SK-N-SH (cell line): ENCODE measurements at regions of chr1 and their contacts with region 1.

Region 1: DNA sequence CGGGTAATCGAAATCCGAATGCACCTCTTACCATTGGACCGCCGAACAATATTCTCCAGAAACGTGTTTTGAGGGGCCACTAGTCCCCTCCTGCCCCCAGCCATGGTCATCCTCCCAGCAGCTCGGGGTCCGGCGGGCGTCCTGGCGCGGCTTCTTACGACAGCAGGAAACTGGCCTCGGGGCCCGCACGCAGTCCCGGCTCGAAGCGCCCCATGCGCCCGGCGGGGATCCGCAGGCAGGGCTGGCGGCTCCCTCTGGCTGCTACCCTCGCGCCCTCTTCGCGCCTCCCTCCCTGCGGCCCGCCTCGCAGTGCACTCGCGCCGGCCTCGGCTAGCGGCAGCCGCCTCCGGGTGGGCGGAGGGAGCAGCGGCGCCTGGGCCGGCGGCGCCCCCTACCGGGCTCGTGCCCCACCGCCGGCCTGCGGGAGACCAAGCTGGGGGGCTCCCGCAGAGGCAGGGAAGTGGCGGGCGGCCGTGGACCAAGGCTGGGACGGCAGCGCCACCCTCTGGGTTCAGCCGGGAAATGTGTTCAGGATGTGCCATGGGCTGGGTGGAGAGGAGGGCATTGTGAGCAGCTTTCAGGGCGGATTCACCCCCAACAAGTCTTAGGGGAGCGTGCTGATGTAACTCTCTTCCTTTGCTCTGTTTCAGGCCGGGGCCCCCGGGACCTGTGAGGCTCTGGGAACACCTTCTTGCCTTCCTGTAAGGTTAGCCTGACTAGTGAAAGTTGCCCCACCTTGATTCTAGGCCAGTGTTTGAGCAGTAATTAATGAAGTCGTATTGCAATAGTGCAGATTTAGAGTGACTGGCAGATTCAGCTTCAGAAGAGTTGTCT is at the start of gene KCNH1:
- DNase-seq: peak; percentile 96
- H3K4me3 ChIP-seq: peak within 1 kb of the TSS; percentile 61 to 72
- H3K27ac ChIP-seq: peak within 1 kb of the TSS in 1 of 2 experiments; percentile 68; a peak in 2 of 4 replicates
- H3K4me1 ChIP-seq: peaks cover 0 to 13% of the 10 kb centered on the region in 2 experiments; a peak in 2 of 4 replicates
- H3K27me3 ChIP-seq: peaks cover 27% of the 10 kb centered on the region
- CTCF ChIP-seq: peak; percentile 95
- EP300 ChIP-seq: no peak; a peak in 2 of 4 replicates
- RAD21 ChIP-seq: peak; percentile 95
- polyA plus RNA-seq, gene KCNH1: 0.08 and 0.26 TPM in 2 replicates

Region 2: GRCh38 chr1:210400043-210400840 is 733.8 kb before region 1 on chr1:
- CTCF ChIA-PET with region 1: interaction called, 323 read pairs
- POLR2A ChIA-PET with region 1: no interaction called
- DNase-seq: peak; percentile 73
- H3K4me3 ChIP-seq: no peak overlapping the region; a peak in 1 of 4 replicates
- H3K27ac ChIP-seq: no peak overlapping the region
- H3K4me1 ChIP-seq: peaks cover 0 to 1% of the 10 kb centered on the region in 2 experiments; a peak in 2 of 4 replicates
- H3K27me3 ChIP-seq: no peaks in the 10 kb centered on the region
- CTCF ChIP-seq: peak; percentile 93
- EP300 ChIP-seq: no peak
- RAD21 ChIP-seq: peak; percentile 88

Region 3: GRCh38 chr1:210455840-210456603 is 678.0 kb before region 1 on chr1:
- CTCF ChIA-PET with region 1: interaction called, 264 read pairs
- POLR2A ChIA-PET with region 1: no interaction called
- DNase-seq: no peak
- H3K4me3 ChIP-seq: no peak overlapping the region
- H3K27ac ChIP-seq: no peak overlapping the region
- H3K4me1 ChIP-seq: no peaks in the 10 kb centered on the region
- H3K27me3 ChIP-seq: no peaks in the 10 kb centered on the region
- CTCF ChIP-seq: no peak
- EP300 ChIP-seq: no peak
- RAD21 ChIP-seq: no peak

Region 4: DNA sequence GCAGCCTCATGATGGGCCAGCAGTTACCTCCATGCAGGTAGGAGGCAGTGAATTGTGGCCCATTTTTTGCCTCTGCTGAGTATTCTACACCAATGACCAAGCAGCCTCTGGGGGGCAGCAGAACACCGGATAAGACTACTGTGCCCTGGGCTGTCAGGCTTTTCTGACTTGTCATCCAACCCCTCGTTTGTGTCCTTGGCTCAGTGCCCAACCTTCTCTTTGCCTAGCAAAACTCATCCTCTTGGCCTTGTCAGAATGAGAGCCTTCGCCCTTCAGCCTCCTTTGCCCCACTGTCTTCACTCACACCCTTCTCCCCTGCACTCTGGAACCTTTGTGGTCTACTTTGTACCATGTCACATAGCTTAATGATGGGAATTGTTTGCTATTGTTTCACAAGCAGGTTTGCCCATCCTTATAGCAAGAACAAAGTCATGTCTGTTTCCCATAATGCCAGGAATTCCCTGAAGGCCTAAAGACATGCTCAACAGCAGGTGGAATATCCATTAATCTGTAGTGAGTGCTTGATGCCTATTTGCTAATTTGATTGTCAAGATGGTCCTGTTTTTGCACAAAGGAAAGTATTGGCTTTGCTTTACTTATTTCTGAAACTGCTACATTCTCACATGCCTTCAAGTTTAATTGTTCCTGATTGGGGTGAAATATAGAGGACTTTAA is 549.5 kb before region 1 on chr1:
- CTCF ChIA-PET with region 1: interaction called, 227 read pairs
- POLR2A ChIA-PET with region 1: interaction called, 12 read pairs
- DNase-seq: peak; percentile 75
- H3K4me3 ChIP-seq: no peak overlapping the region
- H3K27ac ChIP-seq: peak overlapping the region in 1 of 2 experiments; percentile 95; a peak in 2 of 4 replicates
- H3K4me1 ChIP-seq: peaks cover 0 to 16% of the 10 kb centered on the region in 2 experiments; a peak in 2 of 4 replicates
- H3K27me3 ChIP-seq: no peaks in the 10 kb centered on the region
- CTCF ChIP-seq: peak; percentile 88
- EP300 ChIP-seq: peak in 1 of 2 experiments; percentile 90; a peak in 2 of 4 replicates
- RAD21 ChIP-seq: peak; percentile 98

Region 5: GRCh38 chr1:210684466-210685294 is 449.4 kb before region 1 on chr1:
- CTCF ChIA-PET with region 1: interaction called, 12 read pairs
- POLR2A ChIA-PET with region 1: no interaction called
- DNase-seq: no peak
- H3K4me3 ChIP-seq: no peak overlapping the region
- H3K27ac ChIP-seq: no peak overlapping the region
- H3K4me1 ChIP-seq: peaks cover 0 to 14% of the 10 kb centered on the region in 2 experiments; a peak in 1 of 4 replicates
- H3K27me3 ChIP-seq: no peaks in the 10 kb centered on the region
- CTCF ChIP-seq: no peak
- EP300 ChIP-seq: no peak
- RAD21 ChIP-seq: no peak

Region 6: DNA sequence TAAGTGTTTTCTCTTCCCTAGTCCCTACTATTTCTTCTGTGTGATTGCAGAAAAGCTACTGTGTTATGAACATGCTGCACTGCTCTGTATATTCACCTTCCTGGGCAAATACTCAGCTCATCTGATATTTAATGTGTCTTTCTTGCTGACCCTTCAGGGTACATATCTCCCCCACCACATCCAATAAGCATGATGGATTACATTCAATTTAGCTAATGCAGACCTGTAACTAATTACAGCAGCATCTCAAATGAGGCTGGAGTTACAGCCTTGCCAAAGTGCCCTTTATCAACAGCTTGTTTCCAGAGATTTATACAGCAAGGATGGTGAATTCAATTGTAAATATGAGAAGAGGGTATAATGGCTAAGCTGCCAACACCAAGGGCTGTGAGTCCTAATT is 144.1 kb before region 1 on chr1:
- CTCF ChIA-PET with region 1: interaction called, 14 read pairs
- POLR2A ChIA-PET with region 1: interaction called, 11 read pairs
- DNase-seq: peak; percentile 61
- H3K4me3 ChIP-seq: no peak overlapping the region
- H3K27ac ChIP-seq: peak overlapping the region in 1 of 2 experiments; percentile 87; a peak in 2 of 4 replicates
- H3K4me1 ChIP-seq: peaks cover 0 to 7% of the 10 kb centered on the region in 2 experiments; a peak in 2 of 4 replicates
- H3K27me3 ChIP-seq: no peaks in the 10 kb centered on the region
- CTCF ChIP-seq: no peak
- EP300 ChIP-seq: peak in 1 of 2 experiments; percentile 94; a peak in 2 of 4 replicates
- RAD21 ChIP-seq: peak; percentile 18

Region 7: DNA sequence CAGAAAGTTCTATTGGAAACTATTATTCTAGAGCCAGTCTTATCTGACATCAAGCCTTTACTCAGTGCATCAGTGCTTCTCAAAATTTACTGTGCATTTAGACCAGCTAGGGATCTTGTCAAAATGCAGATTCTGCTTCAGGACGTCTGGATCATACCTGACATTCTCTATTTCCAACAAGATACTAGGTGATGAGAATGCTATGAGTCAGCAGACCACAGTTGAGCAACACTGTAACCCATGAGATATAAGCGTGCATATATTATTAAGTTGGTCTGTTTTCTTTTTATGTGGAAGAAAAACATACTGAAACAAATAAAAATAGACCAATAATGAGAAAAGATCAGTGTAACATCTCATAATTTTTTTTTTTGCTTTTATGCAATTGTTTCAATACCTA is 40.3 kb after region 1 on chr1:
- CTCF ChIA-PET with region 1: no interaction called
- POLR2A ChIA-PET with region 1: no interaction called
- DNase-seq: no peak
- H3K4me3 ChIP-seq: no peak overlapping the region
- H3K27ac ChIP-seq: no peak overlapping the region
- H3K4me1 ChIP-seq: no peaks in the 10 kb centered on the region
- H3K27me3 ChIP-seq: no peaks in the 10 kb centered on the region
- CTCF ChIP-seq: no peak
- EP300 ChIP-seq: no peak
- RAD21 ChIP-seq: no peak